Activated CD4-positive, alpha-beta T cell treated with anti-CD3 and anti-CD28 coated beads, Interleukin-2, amount 10 ng/mL, durations not matched to agents 24 days and 14 days (primary cell): ENCODE measurements at regions of chr11 and their contacts with region 1.

Region 1: GRCh38 chr11:92941676-92942571 is 27.5 kb upstream of the MTNR1B start:
- DNase-seq: peak; percentile 69
- H3K4me3 Mint-ChIP-seq: no peak overlapping the region
- H3K27ac Mint-ChIP-seq: no peak overlapping the region
- H3K4me1 Mint-ChIP-seq: peaks cover 3% of the 10 kb centered on the region
- H3K27me3 Mint-ChIP-seq: peaks cover 5% of the 10 kb centered on the region

Region 2: GRCh38 chr11:92830377-92831155 is 111.4 kb before region 1 on chr11:
- intact Hi-C with region 1: no loop called
- DNase-seq: no peak
- H3K4me3 Mint-ChIP-seq: no peak overlapping the region
- H3K27ac Mint-ChIP-seq: no peak overlapping the region
- H3K4me1 Mint-ChIP-seq: no peaks in the 10 kb centered on the region
- H3K27me3 Mint-ChIP-seq: no peaks in the 10 kb centered on the region

Region 3: DNA sequence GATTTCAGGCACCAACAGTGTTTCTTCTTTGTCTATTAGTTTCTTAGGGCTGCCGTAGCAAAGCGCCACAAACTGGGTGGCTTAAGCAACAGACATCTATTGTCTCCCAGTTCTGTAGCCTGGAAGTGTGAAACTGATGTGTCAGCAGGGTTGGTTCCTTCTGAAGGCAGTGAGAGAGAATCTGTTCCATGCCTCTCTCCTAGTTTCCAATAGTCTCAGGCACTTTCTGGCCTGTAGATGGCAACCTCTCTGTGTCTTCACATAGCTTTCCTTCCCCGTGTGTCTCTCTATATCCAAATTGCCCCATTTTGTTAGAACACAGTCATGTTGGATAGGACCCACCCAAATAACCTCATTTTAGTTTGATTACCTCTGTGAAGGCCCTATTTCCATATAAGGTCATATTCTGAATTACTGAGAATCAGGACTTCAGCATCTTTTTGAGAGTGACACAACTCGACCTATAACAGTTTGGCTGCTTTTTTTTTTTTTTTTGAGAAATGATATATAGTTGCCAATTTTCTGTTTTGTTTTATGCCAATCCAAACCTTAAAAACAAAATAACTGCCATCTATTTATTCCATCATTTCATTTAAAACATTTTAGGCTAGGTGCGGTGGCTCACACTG is 147.7 kb after region 1 on chr11:
- intact Hi-C with region 1: loop called (anchors 10 kb)
- DNase-seq: peak; percentile 60
- H3K4me3 Mint-ChIP-seq: no peak overlapping the region
- H3K27ac Mint-ChIP-seq: no peak overlapping the region
- H3K4me1 Mint-ChIP-seq: no peaks in the 10 kb centered on the region
- H3K27me3 Mint-ChIP-seq: peaks cover 9% of the 10 kb centered on the region

Region 4: DNA sequence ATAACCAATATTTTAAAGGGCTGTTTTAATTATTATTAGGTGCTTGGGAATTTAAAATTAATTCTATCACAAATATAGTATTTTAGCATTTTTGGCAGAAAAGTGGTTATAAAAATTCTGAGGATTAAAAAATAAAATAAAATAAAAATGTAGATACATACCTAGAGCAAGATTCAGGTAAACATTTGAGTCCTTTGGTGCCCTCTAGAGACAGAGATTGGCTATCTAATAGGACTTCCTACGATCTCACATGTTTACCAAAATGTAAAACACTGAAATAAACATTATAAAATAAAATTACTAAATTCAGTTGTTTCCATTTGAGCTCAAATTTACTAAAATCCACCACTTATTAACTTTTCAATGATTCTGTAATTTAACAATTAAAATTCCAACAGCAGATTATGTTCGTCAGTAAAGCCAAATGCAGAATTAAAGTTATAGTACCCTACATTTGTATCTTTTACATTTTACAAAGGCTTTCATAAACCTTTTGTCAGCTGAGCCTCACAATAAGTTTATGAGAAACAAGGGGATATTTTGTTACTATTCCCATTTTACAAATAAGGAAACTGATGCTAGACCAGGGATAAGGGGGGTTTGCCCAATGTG is 228.1 kb after region 1 on chr11:
- intact Hi-C with region 1: loop called (anchors 5 kb)
- DNase-seq: no peak
- H3K4me3 Mint-ChIP-seq: no peak overlapping the region
- H3K27ac Mint-ChIP-seq: no peak overlapping the region
- H3K4me1 Mint-ChIP-seq: peaks cover 9% of the 10 kb centered on the region
- H3K27me3 Mint-ChIP-seq: no peaks in the 10 kb centered on the region

Region 5: GRCh38 chr11:93225662-93226061 is 283.7 kb after region 1 on chr11:
- intact Hi-C with region 1: loop called (anchors 1 kb)
- DNase-seq: no peak
- H3K4me3 Mint-ChIP-seq: no peak overlapping the region
- H3K27ac Mint-ChIP-seq: no peak overlapping the region
- H3K4me1 Mint-ChIP-seq: no peaks in the 10 kb centered on the region
- H3K27me3 Mint-ChIP-seq: peaks cover 10% of the 10 kb centered on the region

Region 6: GRCh38 chr11:93652161-93652597 is 710.3 kb after region 1 on chr11:
- intact Hi-C with region 1: loop called (anchors 5 kb)
- DNase-seq: peak; percentile 80
- H3K4me3 Mint-ChIP-seq: no peak overlapping the region
- H3K27ac Mint-ChIP-seq: no peak overlapping the region
- H3K4me1 Mint-ChIP-seq: peaks cover 13% of the 10 kb centered on the region
- H3K27me3 Mint-ChIP-seq: peaks cover 22% of the 10 kb centered on the region